ENCODE measurements at regions of chr14 and their contacts with region 1.

Region 1: GRCh38 chr14:33848706-33849454 is 102.0 kb downstream of the EGLN3 start:
- DNase-seq: peak; percentile 63
- H3K4me3 ChIP-seq: no peak overlapping the region
- H3K27ac ChIP-seq: no peak overlapping the region
- H3K4me1 ChIP-seq: no peaks in the 10 kb centered on the region
- H3K27me3 ChIP-seq: no peaks in the 10 kb centered on the region
- CTCF ChIP-seq: peak; percentile 78 to 85

Region 2: GRCh38 chr14:33986804-33987203 is 137.9 kb after region 1 on chr14:
- CTCF ChIA-PET with region 1: interaction called, 13 read pairs
- dilution Hi-C with region 1: no loop called
- in situ Hi-C with region 1: no loop called
- intact Hi-C with region 1: no loop called
- DNase-seq: peak; percentile 92
- H3K4me3 ChIP-seq: no peak overlapping the region
- H3K27ac ChIP-seq: no peak overlapping the region
- H3K4me1 ChIP-seq: peaks cover 18% of the 10 kb centered on the region
- H3K27me3 ChIP-seq: no peaks in the 10 kb centered on the region
- CTCF ChIP-seq: no peak

Region 3: GRCh38 chr14:34023824-34024767 is 175.2 kb after region 1 on chr14:
- CTCF ChIA-PET with region 1: no interaction called
- dilution Hi-C with region 1: no loop called
- in situ Hi-C with region 1: no loop called
- intact Hi-C with region 1: loop called (anchors 5 kb)
- DNase-seq: peak; percentile 42
- H3K4me3 ChIP-seq: no peak overlapping the region
- H3K27ac ChIP-seq: peak overlapping the region; percentile 55
- H3K4me1 ChIP-seq: peaks cover 18% of the 10 kb centered on the region
- H3K27me3 ChIP-seq: no peaks in the 10 kb centered on the region
- CTCF ChIP-seq: peak in 1 of 2 donors; percentile 28